ENCODE measurements at regions of chr12 and their contacts with region 1.

Region 1: GRCh38 chr12:30806989-30807694 is 52.4 kb upstream of the CAPRIN2 start:
- H3K4me3 Mint-ChIP-seq: no peak overlapping the region
- H3K27ac Mint-ChIP-seq: no peak overlapping the region
- H3K4me1 Mint-ChIP-seq: peaks cover 7% of the 10 kb centered on the region
- H3K27me3 Mint-ChIP-seq: peaks cover 8% of the 10 kb centered on the region

Region 2: GRCh38 chr12:29519585-29520182 is 1287.5 kb before region 1 on chr12:
- intact Hi-C with region 1: loop called (anchors 1 kb)
- H3K4me3 Mint-ChIP-seq: no peak overlapping the region
- H3K27ac Mint-ChIP-seq: no peak overlapping the region
- H3K4me1 Mint-ChIP-seq: no peaks in the 10 kb centered on the region
- H3K27me3 Mint-ChIP-seq: peaks cover 2% of the 10 kb centered on the region

Measured in dendritic cell treated with granulocyte-macrophage colony-stimulating factor and Interleukin-4, amounts not matched to agents 40 ng/mL and 50 ng/mL, for 4 days (primary cell).